Activated CD4-positive, alpha-beta memory T cell treated with anti-CD3 and anti-CD28 coated beads, Interleukin-2, amount 10 ng/mL, durations not matched to agents 7 days and 5 days (primary cell): ENCODE measurements at regions of chr1 and their contacts with region 1.

Region 1: DNA sequence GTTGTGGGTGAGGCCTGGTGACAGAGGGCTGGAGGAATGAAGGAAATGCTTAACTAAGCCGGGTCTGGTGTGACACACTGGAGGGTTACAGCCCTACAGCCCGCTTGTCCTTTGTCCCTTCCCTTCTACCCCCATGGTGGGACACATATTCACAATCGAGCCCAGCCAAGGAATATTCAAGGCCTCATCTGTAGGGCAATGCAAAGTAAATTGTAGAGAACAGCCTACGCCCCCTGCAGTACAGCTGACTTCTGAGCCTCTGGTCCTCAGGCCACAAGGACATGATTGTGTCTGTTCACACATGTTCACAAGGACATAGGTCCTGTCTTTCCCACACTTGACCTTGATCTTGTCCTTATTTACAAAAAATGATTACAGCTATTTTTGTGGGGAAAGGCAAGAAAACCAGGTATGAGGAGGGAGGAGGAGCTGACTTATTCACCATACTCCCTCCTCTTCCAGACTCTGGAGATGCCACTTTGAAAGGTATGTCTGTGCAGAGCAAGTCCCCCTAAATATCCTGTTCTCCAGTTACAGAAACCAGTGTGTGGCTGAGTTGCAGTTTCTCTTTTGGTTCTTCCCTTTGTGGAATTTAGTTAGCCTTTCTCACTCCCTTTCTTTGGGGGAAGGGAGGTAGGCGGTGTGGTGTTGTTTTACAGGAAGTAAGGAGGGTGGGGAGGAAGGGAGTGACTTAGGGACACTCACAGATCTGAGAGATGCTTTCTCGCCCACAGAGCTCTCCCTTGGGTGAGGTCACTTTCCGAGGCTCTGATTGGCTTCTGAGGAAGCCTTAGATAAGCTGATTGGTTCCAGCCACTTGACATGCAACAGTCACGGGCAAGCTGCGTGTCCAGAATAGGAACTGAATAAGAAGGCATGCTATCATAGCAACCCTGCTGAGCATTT is 14.6 kb downstream of the POLR3GL start:
- DNase-seq: peak; percentile 90
- H3K4me3 Mint-ChIP-seq: no peak overlapping the region
- H3K27ac Mint-ChIP-seq: no peak overlapping the region
- H3K4me1 Mint-ChIP-seq: peaks cover 6% of the 10 kb centered on the region
- H3K27me3 Mint-ChIP-seq: no peaks in the 10 kb centered on the region

Region 2: DNA sequence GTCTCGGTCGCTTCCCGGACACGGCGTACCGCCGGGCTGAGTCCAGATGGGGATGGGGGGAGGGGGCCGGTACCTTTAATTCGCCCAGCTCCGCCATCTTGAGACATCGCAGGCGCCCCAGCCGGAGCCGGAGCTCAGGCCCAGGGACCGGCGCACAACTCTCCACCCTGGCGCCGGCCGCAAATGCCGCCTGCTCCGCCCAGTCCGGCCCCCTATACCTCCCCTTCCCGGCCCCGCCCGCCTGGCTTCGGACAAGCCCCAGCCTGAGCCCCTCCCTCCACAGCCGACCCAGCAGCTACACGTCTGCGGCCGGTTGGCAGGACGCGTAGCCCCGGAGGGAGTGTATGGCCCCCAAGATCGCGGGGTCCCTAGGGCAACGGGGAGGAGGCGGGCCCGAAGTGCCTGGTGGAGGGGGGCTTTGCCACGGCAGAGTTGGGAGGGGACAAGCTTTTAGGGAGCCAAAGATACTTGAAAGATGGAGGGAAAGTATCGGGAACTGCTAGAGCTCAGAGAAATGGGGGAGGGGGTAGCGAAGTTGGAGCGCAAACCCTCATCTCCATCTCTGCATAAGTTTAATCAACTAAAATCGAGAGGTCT is 120.1 kb before region 1 on chr1 and contains the start of gene PIAS3:
- CTCF ChIA-PET with region 1: interaction called, 9 read pairs
- POLR2A ChIA-PET with region 1: interaction called, 18 read pairs
- DNase-seq: peak; percentile 90
- H3K4me3 Mint-ChIP-seq: peak within 1 kb of the TSS; percentile 97
- H3K27ac Mint-ChIP-seq: peak within 1 kb of the TSS; percentile 76
- H3K4me1 Mint-ChIP-seq: peaks cover 16% of the 10 kb centered on the region
- H3K27me3 Mint-ChIP-seq: peaks cover 12% of the 10 kb centered on the region
- total RNA-seq, gene PIAS3: 21.2 to 21.7 TPM

Region 3: DNA sequence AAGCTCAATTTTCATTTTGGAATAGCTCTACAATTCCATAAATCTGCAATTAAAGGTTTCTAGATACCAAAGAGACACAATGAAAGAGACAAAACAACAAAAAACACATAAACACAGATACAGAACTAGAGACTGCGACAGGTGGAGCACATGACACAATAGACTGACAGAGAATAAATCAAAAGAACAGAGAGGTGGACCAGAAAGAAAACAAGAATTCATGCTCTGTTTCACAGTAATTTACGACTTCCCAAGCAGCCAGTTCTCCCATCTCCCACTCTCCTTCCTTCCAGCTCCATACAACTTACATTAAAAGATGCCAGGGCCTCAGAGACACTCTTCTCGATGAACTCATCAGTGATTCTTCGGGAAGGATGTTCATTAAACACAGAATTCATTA is 36.7 kb before region 1 on chr1:
- CTCF ChIA-PET with region 1: no interaction called
- POLR2A ChIA-PET with region 1: no interaction called
- DNase-seq: no peak
- H3K4me3 Mint-ChIP-seq: no peak overlapping the region
- H3K27ac Mint-ChIP-seq: no peak overlapping the region
- H3K4me1 Mint-ChIP-seq: peaks cover 2% of the 10 kb centered on the region
- H3K27me3 Mint-ChIP-seq: no peaks in the 10 kb centered on the region

Region 4: DNA sequence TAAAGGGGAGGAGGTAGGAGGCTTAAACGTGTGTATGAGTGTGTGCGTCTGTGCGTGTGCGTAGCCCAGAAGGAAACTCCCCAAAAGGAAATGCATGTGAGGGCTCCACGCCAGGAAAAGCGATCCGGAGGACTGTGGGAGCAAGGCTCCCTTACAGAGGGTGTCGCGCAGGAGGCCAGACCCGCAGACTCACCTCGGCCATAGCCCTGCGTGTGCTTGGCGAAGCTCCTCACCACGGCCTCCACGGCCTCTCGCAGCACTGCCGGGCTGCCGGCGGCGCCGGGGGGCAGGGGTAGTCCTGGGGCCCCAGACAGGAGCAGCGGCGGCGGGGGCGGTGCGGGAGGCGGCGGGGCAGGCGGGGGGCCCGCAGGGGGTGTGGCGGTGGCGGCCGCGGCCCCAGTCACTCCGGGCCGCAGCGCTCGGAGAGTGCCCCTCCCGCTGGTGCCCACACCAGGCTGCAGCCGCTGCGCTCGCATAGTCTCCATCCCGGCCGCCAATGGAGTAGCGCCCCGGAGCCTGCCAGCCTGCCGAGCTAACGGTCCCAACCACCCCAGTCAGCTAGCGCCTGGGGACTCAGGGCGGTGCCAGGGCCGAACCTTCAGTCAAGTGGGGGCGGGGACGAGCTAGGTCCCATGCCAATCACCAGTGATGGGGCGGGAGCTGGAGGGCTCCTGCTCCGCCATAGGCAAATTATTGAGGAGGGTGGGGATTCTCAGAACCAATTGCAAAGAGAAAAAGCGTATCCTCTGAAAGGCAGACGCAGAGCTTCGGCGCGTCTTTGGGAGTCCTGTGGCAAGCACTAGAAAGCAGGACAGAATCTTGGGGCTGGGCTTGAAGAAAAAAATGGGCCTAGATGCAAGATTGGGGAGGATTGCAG is 21.4 kb before region 1 on chr1 and contains the start of gene LIX1L:
- CTCF ChIA-PET with region 1: interaction called, 32 read pairs
- POLR2A ChIA-PET with region 1: interaction called, 94 read pairs
- DNase-seq: peak; percentile 96
- H3K4me3 Mint-ChIP-seq: peak within 1 kb of the TSS; percentile 86
- H3K27ac Mint-ChIP-seq: peak within 1 kb of the TSS; percentile 86
- H3K4me1 Mint-ChIP-seq: peaks cover 73% of the 10 kb centered on the region
- H3K27me3 Mint-ChIP-seq: peaks cover 5% of the 10 kb centered on the region
- total RNA-seq, gene LIX1L: 50.3 to 51.0 TPM

Region 5: GRCh38 chr1:145996433-145997015 is 17.4 kb after region 1 on chr1 and contains the start of gene TXNIP:
- CTCF ChIA-PET with region 1: interaction called, 349 read pairs
- POLR2A ChIA-PET with region 1: interaction called, 582 read pairs
- DNase-seq: peak; percentile 96
- H3K4me3 Mint-ChIP-seq: peak within 1 kb of the TSS; percentile 93
- H3K27ac Mint-ChIP-seq: peak within 1 kb of the TSS; percentile 97
- H3K4me1 Mint-ChIP-seq: peaks cover 63% of the 10 kb centered on the region
- H3K27me3 Mint-ChIP-seq: no peaks in the 10 kb centered on the region
- total RNA-seq, gene TXNIP: 397 to 407 TPM

Region 6: DNA sequence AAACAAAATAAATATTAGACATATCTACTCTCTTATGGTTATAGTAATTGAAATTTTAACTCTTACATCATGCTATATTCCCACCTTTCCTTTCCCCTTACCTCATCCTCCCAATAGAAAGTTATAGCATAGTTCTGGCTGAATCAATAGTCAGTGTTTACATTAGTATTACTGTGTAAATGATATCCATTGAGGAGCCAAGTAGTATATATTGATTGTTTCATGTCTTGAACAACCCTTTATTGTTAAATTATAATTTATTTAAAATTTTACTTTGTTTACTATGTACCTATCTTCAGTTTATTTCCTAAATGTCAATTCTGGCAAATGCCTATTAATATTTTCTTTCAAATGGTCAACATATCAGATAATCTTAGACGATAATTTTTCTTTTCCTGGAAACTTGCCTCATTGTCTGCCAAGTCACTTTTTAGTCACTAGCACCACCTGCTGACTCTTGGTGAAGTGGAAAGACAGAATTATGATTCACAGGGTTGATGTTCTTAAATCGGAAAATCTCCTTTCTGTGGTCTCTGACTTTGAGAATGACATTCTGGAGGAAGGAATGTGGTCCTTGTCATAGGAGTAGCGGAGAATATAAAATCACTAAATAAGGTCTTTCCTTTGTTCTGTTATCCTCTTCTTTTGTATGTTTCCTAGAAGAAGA is 33.8 kb after region 1 on chr1:
- CTCF ChIA-PET with region 1: interaction called, 349 read pairs
- POLR2A ChIA-PET with region 1: interaction called, 53 read pairs
- DNase-seq: peak; percentile 62
- H3K4me3 Mint-ChIP-seq: no peak overlapping the region
- H3K27ac Mint-ChIP-seq: no peak overlapping the region
- H3K4me1 Mint-ChIP-seq: peaks cover 11% of the 10 kb centered on the region
- H3K27me3 Mint-ChIP-seq: peaks cover 20% of the 10 kb centered on the region

Region 7: DNA sequence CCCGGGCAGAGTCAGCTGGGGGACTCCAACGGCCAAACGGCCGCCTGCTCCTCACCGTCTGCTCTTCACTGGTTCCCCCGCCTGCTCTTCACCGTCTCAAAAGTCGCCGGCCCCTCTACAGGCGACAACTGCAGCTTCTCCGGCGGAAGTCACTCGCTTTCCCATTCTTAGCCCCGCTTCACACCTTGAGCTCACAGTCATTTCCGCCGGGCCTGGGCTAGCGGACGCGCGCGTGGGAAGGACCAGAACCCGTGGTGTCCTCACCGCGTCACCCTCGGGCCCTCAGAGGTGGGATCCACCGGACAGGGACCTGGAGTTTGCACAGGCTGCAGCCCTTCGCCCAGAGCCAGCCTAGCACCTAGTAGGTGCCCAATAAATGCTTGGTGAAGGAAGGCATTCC is 70.3 kb after region 1 on chr1:
- CTCF ChIA-PET with region 1: interaction called, 5 read pairs
- POLR2A ChIA-PET with region 1: interaction called, 19 read pairs
- DNase-seq: no peak
- H3K4me3 Mint-ChIP-seq: no peak overlapping the region
- H3K27ac Mint-ChIP-seq: no peak overlapping the region
- H3K4me1 Mint-ChIP-seq: peaks cover 32% of the 10 kb centered on the region
- H3K27me3 Mint-ChIP-seq: no peaks in the 10 kb centered on the region

Region 8: GRCh38 chr1:147109041-147109440 is 1129.9 kb after region 1 on chr1:
- CTCF ChIA-PET with region 1: no interaction called
- POLR2A ChIA-PET with region 1: no interaction called
- DNase-seq: no peak
- H3K4me3 Mint-ChIP-seq: no peak overlapping the region
- H3K27ac Mint-ChIP-seq: no peak overlapping the region
- H3K4me1 Mint-ChIP-seq: peaks cover 6% of the 10 kb centered on the region
- H3K27me3 Mint-ChIP-seq: peaks cover 10% of the 10 kb centered on the region